Left ventricle myocardium superior (tissue), 1 donor: ENCODE measurements at regions of chr9 and their contacts with region 1.

Region 1: DNA sequence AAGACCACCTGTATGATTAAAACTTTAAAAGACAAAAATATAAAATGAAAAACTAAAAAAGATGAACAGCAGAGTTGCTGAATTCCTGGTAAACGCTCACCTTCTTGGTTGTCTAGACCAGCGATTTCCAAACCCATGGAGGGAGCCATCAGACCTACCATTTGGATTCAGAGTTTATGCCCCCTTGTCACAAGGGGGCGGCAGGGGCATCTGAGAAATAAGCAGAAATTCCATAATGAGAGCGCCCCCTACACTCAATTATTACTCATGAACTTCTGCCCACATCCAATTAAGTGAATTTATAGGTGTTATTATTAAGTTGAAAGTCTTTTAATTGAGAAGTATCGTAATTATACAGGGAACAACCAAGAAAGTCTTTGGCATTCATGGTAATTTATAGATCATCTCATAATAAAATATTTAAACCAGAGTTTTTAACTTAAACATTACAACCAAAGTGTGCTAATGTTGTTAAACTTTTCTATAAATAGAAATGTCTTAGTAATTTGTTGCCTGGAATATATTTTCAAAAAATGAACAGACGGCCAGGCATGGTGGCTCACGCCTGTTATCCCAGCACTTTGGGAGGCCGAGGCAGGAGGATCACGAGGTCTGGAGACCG is 35.2 kb upstream of the SPATA31C2 start:
- DNase-seq: peak; percentile 61
- ATAC-seq: peak; percentile 65

Region 2: GRCh38 chr9:88578121-88579054 is 404.9 kb after region 1 on chr9:
- intact Hi-C with region 1: loop called (anchors 10 kb)
- DNase-seq: peak; percentile 88
- ATAC-seq: peak; percentile 93